ENCODE measurements at regions of chr6 and their contacts with region 1.

Region 1: DNA sequence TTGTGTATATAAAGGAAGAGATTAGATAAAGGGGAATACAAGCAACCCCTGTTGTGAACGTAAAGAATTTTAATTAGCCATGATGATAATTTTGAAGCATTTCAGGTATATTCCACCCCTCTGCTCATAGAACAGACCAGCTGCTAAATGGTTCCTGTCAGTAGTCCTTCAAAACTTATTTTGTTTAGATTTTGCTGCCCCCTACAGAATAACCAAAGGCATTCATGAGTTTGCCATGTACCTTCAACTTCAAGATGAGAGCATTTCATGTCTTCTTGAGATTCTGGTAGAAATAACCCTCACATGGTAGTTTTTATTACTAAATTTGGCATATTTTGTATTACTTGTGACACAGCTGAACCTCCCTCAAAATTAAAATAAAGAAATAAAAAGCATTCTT is 1586.7 kb downstream of the HACE1 start:
- DNase-seq: no peak
- H3K4me3 Mint-ChIP-seq: no peak overlapping the region
- H3K27ac Mint-ChIP-seq: no peak overlapping the region
- H3K4me1 Mint-ChIP-seq: no peaks in the 10 kb centered on the region
- H3K27me3 Mint-ChIP-seq: no peaks in the 10 kb centered on the region
- CTCF ChIP-seq: peak; percentile 31

Region 2: GRCh38 chr6:102853269-102853955 is 419.6 kb before region 1 on chr6:
- CTCF ChIA-PET with region 1: no interaction called
- intact Hi-C with region 1: loop called (anchors 2 kb)
- DNase-seq: no peak
- H3K4me3 Mint-ChIP-seq: no peak overlapping the region
- H3K27ac Mint-ChIP-seq: no peak overlapping the region
- H3K4me1 Mint-ChIP-seq: no peaks in the 10 kb centered on the region
- H3K27me3 Mint-ChIP-seq: no peaks in the 10 kb centered on the region
- CTCF ChIP-seq: no peak

Region 3: GRCh38 chr6:103344554-103345163 is 71.6 kb after region 1 on chr6:
- CTCF ChIA-PET with region 1: no interaction called
- intact Hi-C with region 1: loop called (anchors 5 kb)
- DNase-seq: no peak
- H3K4me3 Mint-ChIP-seq: no peak overlapping the region
- H3K27ac Mint-ChIP-seq: no peak overlapping the region
- H3K4me1 Mint-ChIP-seq: no peaks in the 10 kb centered on the region
- H3K27me3 Mint-ChIP-seq: no peaks in the 10 kb centered on the region
- CTCF ChIP-seq: no peak

Region 4: DNA sequence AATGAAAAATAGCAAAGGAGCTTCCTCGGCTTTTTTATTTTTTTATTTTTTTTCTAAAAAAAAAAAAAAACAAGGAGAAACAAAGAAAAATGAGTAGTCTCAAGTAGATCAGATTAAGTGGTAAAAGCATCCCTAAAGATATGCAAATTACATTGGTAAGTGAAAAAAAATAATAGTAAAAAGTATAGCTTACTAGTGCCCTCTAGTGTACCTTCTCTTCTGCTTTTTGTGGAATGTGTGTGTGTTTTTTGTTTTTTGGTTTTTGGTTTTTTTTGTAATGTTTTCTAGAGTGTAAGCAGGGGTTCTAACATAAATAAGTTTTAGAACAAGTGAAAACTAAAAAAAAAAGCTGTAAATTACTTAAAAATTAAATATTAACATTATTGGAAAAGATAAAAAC is 524.7 kb after region 1 on chr6:
- CTCF ChIA-PET with region 1: no interaction called
- intact Hi-C with region 1: loop called (anchors 5 kb)
- DNase-seq: no peak
- H3K4me3 Mint-ChIP-seq: no peak overlapping the region
- H3K27ac Mint-ChIP-seq: no peak overlapping the region
- H3K4me1 Mint-ChIP-seq: no peaks in the 10 kb centered on the region
- H3K27me3 Mint-ChIP-seq: no peaks in the 10 kb centered on the region
- CTCF ChIP-seq: peak; percentile 32

Measured in Calu3 (cell line).